Activated CD4-positive, alpha-beta T cell treated with anti-CD3 and anti-CD28 coated beads for 36 hours (primary cell): ENCODE measurements at regions of chr10 and their contacts with region 1.

Region 1: DNA sequence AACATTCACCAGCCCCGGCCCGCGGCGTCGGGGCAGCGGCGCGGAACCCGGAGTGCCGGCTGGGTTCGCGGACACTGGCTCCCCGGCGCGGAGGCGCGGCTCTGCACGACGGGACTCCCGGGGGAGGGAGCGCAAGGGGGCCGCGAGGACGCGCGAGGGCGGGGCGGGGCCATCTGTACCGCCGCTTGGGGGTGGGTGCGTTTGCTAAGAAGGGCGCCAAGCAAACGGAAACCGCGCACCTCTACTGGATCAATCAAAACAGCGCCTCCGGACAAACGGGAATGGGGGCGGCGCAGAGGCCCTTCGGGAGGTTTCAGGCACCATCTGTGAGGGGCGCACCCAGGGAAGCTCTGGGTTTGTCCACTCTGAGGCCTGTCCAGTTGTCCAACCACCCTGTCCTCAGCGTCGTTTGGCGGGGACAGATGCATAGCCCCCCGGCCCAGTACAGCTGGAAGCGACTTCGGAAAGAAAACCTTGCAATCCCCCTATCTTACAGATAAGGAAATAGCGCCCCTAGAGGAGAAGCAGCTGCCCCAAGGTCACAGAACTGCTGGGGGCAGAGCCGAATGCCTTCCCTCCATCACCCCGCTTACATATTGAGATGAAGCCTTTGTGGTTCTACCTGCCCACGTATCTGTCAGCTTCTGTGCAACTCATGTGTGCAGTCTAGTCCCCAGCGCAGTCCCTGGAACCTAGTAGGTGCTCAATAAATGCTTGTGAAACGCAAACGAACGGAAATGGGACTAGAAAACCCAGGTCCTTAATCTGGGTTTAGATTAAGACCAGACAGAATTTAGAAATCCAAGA is 10.7 kb upstream of the SLIT1 start:
- DNase-seq: peak; percentile 77
- ATAC-seq: peak; percentile 93
- H3K4me3 Mint-ChIP-seq: peak overlapping the region; percentile 62
- H3K27ac Mint-ChIP-seq: no peak overlapping the region
- H3K4me1 Mint-ChIP-seq: peaks cover 4% of the 10 kb centered on the region
- H3K27me3 Mint-ChIP-seq: peaks cover 11% of the 10 kb centered on the region

Region 2: GRCh38 chr10:97081621-97082235 is 114.7 kb before region 1 on chr10:
- CTCF ChIA-PET with region 1: interaction called, 16 read pairs
- POLR2A ChIA-PET with region 1: no interaction called
- intact Hi-C with region 1: no loop called
- DNase-seq: peak; percentile 83
- ATAC-seq: peak; percentile 73
- H3K4me3 Mint-ChIP-seq: no peak overlapping the region
- H3K27ac Mint-ChIP-seq: no peak overlapping the region
- H3K4me1 Mint-ChIP-seq: no peaks in the 10 kb centered on the region
- H3K27me3 Mint-ChIP-seq: peaks cover 20% of the 10 kb centered on the region

Region 3: GRCh38 chr10:97123765-97124164 is 72.7 kb before region 1 on chr10:
- CTCF ChIA-PET with region 1: no interaction called
- POLR2A ChIA-PET with region 1: no interaction called
- intact Hi-C with region 1: no loop called
- DNase-seq: no peak
- ATAC-seq: no peak
- H3K4me3 Mint-ChIP-seq: no peak overlapping the region
- H3K27ac Mint-ChIP-seq: no peak overlapping the region
- H3K4me1 Mint-ChIP-seq: no peaks in the 10 kb centered on the region
- H3K27me3 Mint-ChIP-seq: peaks cover 2% of the 10 kb centered on the region

Region 4: DNA sequence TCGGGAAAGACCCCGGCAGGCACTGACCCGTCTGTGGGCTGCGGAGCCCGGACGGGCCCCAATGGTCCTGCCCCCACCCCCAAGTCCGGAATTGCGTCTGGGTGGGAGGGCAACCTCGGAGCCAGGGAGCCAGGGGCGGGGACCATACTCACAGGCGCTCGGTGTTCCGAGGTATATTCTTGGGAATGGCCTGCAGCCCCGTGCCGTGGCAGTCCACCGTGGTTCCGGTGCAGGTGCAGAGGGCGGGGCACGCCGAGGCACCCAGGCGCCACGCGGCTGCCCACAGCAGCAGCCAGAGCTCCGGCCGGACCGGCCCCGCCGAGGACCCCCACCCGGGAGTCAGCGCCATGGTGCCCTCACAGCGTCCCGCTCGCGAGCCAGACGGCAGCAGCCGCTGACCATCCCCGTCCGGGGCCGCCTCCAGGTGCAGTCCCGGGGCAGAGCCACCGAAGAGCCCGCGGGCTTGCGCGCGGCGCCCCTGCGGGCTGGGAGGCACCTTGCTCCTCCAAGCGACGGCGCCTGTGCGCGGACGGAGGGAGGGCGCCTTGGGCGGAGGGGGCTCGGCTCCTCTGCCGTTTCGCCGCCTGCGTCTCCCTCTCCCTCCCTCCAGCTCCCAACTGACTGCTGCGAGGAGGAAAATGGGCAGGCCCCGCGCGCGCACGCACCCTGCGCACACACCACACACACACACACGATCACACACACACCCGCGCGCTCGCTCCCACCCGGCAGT is 10.9 kb before region 1 on chr10 and contains the start of gene SLIT1:
- CTCF ChIA-PET with region 1: interaction called, 39 read pairs
- POLR2A ChIA-PET with region 1: no interaction called
- intact Hi-C with region 1: no loop called
- DNase-seq: peak; percentile 30
- ATAC-seq: peak; percentile 57
- H3K4me3 Mint-ChIP-seq: peak within 1 kb of the TSS; percentile 24
- H3K27ac Mint-ChIP-seq: no peak within 1 kb of the TSS
- H3K4me1 Mint-ChIP-seq: peaks cover 8% of the 10 kb centered on the region
- H3K27me3 Mint-ChIP-seq: peaks cover 40% of the 10 kb centered on the region
- total RNA-seq, gene SLIT1: 0.94 to 1.4 TPM

Region 5: GRCh38 chr10:97234400-97234799 is 38.0 kb after region 1 on chr10:
- CTCF ChIA-PET with region 1: interaction called, 4 read pairs
- POLR2A ChIA-PET with region 1: no interaction called
- intact Hi-C with region 1: loop called in 1 of 2 experiments (anchors 1 kb)
- DNase-seq: no peak
- ATAC-seq: no peak
- H3K4me3 Mint-ChIP-seq: no peak overlapping the region
- H3K27ac Mint-ChIP-seq: no peak overlapping the region
- H3K4me1 Mint-ChIP-seq: peaks cover 17% of the 10 kb centered on the region
- H3K27me3 Mint-ChIP-seq: no peaks in the 10 kb centered on the region

Region 6: GRCh38 chr10:98160026-98160425 is 963.6 kb after region 1 on chr10:
- CTCF ChIA-PET with region 1: no interaction called
- POLR2A ChIA-PET with region 1: no interaction called
- intact Hi-C with region 1: no loop called
- DNase-seq: no peak
- ATAC-seq: no peak
- H3K4me3 Mint-ChIP-seq: no peak overlapping the region
- H3K27ac Mint-ChIP-seq: no peak overlapping the region
- H3K4me1 Mint-ChIP-seq: peaks cover 13% of the 10 kb centered on the region
- H3K27me3 Mint-ChIP-seq: no peaks in the 10 kb centered on the region